ENCODE measurements at regions of chr22 and their contacts with region 1.

Region 1: GRCh38 chr22:22235558-22235957 is 9.0 kb upstream of the VPREB1 start:
- DNase-seq: peak; percentile 81
- ATAC-seq: peak; percentile 60
- H3K4me3 Mint-ChIP-seq: no peak overlapping the region
- H3K27ac Mint-ChIP-seq: no peak overlapping the region
- H3K4me1 Mint-ChIP-seq: peaks cover 3% of the 10 kb centered on the region
- H3K27me3 Mint-ChIP-seq: no peaks in the 10 kb centered on the region
- CTCF ChIP-seq: peak; percentile 77

Region 2: DNA sequence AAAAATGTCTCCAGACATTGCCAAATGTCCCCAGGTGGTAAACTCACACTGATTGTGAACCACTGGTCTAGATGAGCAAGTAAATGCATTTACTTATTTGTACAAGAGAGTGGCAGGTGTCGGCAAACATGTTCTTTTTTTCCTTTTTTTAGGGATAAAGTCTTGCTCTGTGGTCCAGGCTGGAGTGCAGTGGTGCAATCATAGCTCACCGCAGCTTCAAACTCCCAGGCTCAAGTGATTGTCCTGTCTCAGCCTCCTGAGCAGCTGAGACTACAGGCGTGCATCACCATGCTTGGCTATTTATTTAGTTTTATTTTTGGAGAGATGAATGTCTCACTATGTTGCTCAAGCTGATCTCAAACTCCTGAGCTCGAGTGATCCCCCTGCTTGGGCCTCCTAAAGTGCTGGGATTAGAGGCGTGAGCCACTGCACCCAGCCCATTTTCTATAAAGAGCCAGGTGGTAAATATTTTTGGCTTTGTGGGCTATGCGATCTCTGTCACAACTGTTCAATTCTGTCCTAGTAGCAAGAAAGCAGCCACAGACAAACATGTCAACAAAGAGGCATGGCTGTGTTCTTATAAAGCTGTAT is 10.5 kb after region 1 on chr22:
- CTCF ChIA-PET with region 1: interaction called, 10 read pairs
- POLR2A ChIA-PET with region 1: interaction called, 3 read pairs
- intact Hi-C with region 1: no loop called
- DNase-seq: no peak
- ATAC-seq: no peak
- H3K4me3 Mint-ChIP-seq: no peak overlapping the region
- H3K27ac Mint-ChIP-seq: no peak overlapping the region
- H3K4me1 Mint-ChIP-seq: peaks cover 10% of the 10 kb centered on the region
- H3K27me3 Mint-ChIP-seq: peaks cover 2% of the 10 kb centered on the region
- CTCF ChIP-seq: no peak

Region 3: GRCh38 chr22:22327723-22328122 is 92.2 kb after region 1 on chr22:
- CTCF ChIA-PET with region 1: no interaction called
- POLR2A ChIA-PET with region 1: no interaction called
- intact Hi-C with region 1: no loop called
- DNase-seq: no peak
- ATAC-seq: no peak
- H3K4me3 Mint-ChIP-seq: no peak overlapping the region
- H3K27ac Mint-ChIP-seq: no peak overlapping the region
- H3K4me1 Mint-ChIP-seq: no peaks in the 10 kb centered on the region
- H3K27me3 Mint-ChIP-seq: peaks cover 22% of the 10 kb centered on the region
- CTCF ChIP-seq: no peak